Esophagus squamous epithelium (tissue), 5 donors: ENCODE measurements at regions of chr10 and their contacts with region 1.

Region 1: DNA sequence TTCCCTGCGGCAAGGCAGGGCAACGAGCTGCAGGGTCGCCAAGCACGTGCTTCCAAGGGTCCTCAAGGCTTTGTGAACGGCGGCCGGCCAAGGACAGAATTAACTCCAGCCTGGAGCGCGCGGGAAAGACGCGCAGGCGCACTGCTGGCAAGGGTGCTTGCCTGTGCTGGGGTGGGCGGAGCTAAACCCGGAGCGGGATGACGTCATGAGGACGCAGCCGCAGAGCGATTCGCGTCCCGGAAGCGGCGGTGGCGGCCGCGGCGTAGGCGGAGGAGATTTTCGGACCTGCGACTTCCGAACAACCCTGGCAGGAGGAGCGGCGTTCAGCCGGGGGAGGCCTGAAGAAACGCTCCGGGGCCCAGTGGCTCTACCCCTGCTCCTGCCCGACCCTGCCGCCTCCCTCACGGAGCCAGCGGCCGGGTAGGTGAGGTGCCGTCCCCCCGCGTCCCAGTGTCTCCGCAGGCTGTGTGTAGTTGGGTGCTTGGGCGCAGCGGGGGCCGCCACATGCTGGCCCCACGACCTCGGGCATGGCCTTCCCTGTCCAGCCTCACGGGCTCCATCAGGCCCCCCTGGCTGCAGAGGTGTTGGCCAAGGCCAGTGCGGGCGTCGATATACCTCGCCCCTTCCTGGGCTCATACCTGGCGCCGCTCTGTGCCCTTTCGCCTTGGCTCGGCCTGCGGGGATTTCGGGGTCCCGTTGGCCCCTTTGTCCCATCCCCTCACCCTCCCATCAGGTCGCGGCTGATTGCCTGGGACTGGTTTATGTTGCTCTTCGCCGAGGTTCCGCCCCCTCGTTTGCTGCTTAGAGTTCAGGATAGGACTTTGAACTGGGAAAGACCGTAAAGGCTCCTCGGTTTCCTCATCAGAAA is at the start of gene ZFYVE27:
- DNase-seq: peak; percentile 52
- H3K4me3 ChIP-seq: peak within 1 kb of the TSS; percentile 66 to 94 (median 90)
- H3K27ac ChIP-seq: peak within 1 kb of the TSS; percentile 91 to 98 (median 96)
- H3K4me1 ChIP-seq: peaks cover 9 to 41% (median 17%) of the 10 kb centered on the region in 3 donors
- H3K27me3 ChIP-seq: no peaks in the 10 kb centered on the region
- CTCF ChIP-seq: peak in 2 of 6 experiments; percentile 1 to 23
- POLR2A ChIP-seq: peak in 3 of 4 donors; percentile 76 to 98 (median 95)
- total RNA-seq, gene ZFYVE27: 10.1 to 16.0 (median 13.4) TPM

Region 2: DNA sequence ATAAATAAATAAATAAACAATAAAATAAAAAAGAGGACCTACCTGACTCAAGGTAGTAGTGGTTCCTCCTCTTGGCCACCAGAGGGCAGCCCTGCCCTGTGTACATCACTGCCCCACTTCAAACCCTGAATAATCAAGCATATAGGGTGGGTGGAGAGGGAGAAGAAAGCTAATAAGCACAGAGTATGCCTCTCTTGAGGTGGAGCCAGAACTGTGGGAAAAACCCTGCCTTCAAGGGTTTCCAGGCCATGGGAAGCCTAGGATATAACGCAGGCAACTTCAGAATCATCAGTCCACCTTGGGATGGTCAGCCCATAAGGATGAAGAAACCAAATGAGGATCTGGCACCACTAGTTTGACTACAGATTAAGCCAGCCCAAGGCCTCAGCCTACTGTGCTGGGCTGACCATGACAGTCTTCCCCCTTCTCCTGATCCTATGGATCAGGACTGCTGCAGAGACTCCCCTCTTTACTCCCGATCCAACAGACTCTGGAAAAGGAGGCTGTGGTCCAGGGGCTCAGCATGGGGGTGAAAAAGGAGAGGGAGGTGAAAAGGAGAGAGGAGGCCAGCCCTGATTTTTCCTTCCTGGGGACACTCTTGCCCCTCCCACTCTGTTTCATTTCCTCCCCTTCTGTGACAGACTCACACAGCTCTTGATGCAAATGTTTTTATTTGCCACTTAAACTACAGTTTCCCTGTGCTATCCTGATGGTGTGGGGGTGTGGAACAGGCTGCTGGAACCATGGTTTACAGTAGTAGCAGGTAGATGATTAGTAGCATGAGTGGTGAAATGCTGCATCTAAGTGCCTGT is 60.2 kb before region 1 on chr10:
- intact Hi-C with region 1: loop called (anchors 10 kb)
- DNase-seq: no peak
- H3K4me3 ChIP-seq: no peak overlapping the region
- H3K27ac ChIP-seq: peak overlapping the region in 2 of 4 donors; percentile 2 to 12
- H3K4me1 ChIP-seq: peaks cover 0 to 9% (median under 1%) of the 10 kb centered on the region in 3 donors
- H3K27me3 ChIP-seq: no peaks in the 10 kb centered on the region
- CTCF ChIP-seq: peak; percentile 52 to 90 (median 83)
- POLR2A ChIP-seq: no peak

Region 3: DNA sequence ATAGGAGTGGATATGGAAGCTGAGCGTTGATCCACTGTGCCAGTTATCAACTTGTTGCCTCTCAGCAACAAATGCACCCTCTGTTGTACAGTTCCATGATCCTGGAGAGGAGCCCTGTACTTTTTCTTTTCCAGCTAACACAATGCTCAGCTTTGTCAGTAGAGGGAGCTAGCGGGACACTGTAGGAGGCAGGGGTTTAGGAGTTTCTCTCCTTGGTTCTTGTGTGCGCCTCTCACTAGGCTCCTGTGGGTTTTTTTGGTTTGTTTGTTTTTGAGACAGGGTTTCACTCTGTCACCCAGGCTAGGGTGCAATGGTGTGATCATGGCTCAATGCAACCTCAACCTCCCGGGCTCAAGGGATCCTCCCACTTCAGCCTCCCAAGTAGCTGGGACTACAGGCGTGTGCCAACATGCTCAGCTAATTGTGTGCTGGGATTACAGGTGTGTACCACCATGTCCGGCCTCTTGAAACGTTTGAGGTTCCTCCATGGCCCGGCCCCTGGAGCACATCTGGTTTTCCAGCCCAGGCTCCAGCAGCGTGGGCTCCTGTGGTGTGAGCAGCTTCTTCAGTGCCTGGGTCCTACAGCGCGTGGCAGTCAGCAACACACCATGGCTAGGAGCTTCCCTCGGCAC is 35.6 kb before region 1 on chr10:
- intact Hi-C with region 1: loop called (anchors 5 kb)
- DNase-seq: no peak
- H3K4me3 ChIP-seq: no peak overlapping the region
- H3K27ac ChIP-seq: no peak overlapping the region
- H3K4me1 ChIP-seq: peaks cover 0 to 9% (median 8%) of the 10 kb centered on the region in 3 donors
- H3K27me3 ChIP-seq: peaks cover 0 to 20% (median 0%) of the 10 kb centered on the region in 4 donors
- CTCF ChIP-seq: peak; percentile 43 to 82 (median 74)
- POLR2A ChIP-seq: no peak